Mammary epithelial cell (primary cell): ENCODE measurements at regions of chr4 and their contacts with region 1.

Region 1: GRCh38 chr4:113394730-113395530 is 345.5 kb downstream of the ANK2 start:
- DNase-seq: peak; percentile 78
- H3K4me3 ChIP-seq: no peak overlapping the region
- H3K27ac ChIP-seq: no peak overlapping the region
- H3K4me1 ChIP-seq: no peaks in the 10 kb centered on the region
- H3K27me3 ChIP-seq: no peaks in the 10 kb centered on the region
- CTCF ChIP-seq: peak; percentile 57 to 72

Region 2: DNA sequence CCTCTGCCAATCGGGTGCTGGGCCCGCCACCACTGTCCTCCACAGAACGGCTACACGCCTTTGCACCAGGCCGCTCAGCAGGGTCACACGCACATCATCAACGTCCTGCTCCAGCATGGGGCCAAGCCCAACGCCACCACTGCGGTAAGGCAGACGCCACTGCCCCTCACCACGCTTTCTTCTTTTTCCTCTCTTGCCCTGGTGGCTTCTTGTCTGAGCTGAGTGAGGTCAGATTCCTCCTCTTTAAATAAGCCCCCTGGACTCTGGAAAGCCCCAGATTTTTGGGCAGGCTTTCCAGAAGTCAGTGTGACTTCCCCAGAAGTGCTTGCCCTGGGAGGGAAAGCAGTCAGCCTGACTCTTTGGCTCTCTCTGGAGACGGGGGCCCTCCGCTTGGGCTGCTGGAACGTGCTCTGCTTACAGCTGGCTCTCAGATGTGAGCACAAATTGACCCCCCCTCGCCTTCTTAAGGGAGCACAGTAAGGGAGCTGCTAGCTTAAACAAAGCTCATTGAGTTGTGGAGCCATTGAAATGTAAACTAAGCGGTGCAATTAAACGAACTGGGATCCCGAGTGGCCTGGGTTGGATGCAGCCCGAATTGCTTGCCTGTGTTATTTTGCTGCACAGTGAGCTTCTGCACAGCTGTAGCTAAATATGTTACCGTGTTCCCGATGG is 102.4 kb before region 1 on chr4:
- CTCF ChIA-PET with region 1: no interaction called
- dilution Hi-C with region 1: no loop called
- in situ Hi-C with region 1: no loop called
- intact Hi-C with region 1: loop called (anchors 2 kb)
- DNase-seq: no peak
- H3K4me3 ChIP-seq: no peak overlapping the region
- H3K27ac ChIP-seq: no peak overlapping the region
- H3K4me1 ChIP-seq: no peaks in the 10 kb centered on the region
- H3K27me3 ChIP-seq: no peaks in the 10 kb centered on the region
- CTCF ChIP-seq: no peak

Region 3: DNA sequence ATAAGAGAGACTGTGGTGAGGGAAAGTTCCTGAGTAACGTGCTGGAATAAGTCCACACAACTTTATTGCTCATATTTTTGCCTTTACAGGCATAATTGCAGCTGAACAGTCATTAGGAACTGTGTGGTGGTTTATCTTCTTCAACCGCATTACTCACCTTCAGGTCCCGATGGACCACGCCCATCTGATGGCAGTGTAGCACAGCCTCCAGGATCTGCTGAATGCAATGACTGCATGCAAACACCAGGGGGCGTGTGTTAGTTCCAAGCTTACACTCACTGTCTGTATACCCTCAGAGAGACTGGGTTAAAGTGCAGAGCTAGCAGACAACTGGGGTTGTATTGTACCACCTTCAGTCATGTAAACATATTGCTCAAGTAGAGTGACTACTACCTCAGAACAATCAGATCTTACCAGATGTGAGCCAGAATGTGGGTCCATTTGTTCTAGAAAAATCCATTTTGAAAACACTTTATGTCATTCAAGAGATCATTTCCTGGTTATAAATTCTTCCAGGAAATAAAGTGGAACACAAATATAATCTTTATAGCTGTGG is 152.6 kb after region 1 on chr4:
- CTCF ChIA-PET with region 1: no interaction called
- dilution Hi-C with region 1: no loop called
- in situ Hi-C with region 1: no loop called
- intact Hi-C with region 1: loop called (anchors 1 kb)
- DNase-seq: peak; percentile 98
- H3K4me3 ChIP-seq: no peak overlapping the region
- H3K27ac ChIP-seq: peak overlapping the region; percentile 34
- H3K4me1 ChIP-seq: no peaks in the 10 kb centered on the region
- H3K27me3 ChIP-seq: no peaks in the 10 kb centered on the region
- CTCF ChIP-seq: peak; percentile 98 to 99

Region 4: GRCh38 chr4:113908829-113909228 is 513.9 kb after region 1 on chr4:
- CTCF ChIA-PET with region 1: no interaction called
- dilution Hi-C with region 1: no loop called
- in situ Hi-C with region 1: no loop called
- intact Hi-C with region 1: no loop called
- DNase-seq: no peak
- H3K4me3 ChIP-seq: no peak overlapping the region
- H3K27ac ChIP-seq: no peak overlapping the region
- H3K4me1 ChIP-seq: no peaks in the 10 kb centered on the region
- H3K27me3 ChIP-seq: no peaks in the 10 kb centered on the region
- CTCF ChIP-seq: no peak

Region 5: GRCh38 chr4:113952452-113953029 is 557.6 kb after region 1 on chr4:
- CTCF ChIA-PET with region 1: no interaction called
- dilution Hi-C with region 1: no loop called
- in situ Hi-C with region 1: no loop called
- intact Hi-C with region 1: loop called (anchors 2 kb)
- DNase-seq: peak; percentile 27
- H3K4me3 ChIP-seq: no peak overlapping the region
- H3K27ac ChIP-seq: no peak overlapping the region
- H3K4me1 ChIP-seq: no peaks in the 10 kb centered on the region
- H3K27me3 ChIP-seq: no peaks in the 10 kb centered on the region
- CTCF ChIP-seq: peak; percentile 69 to 75

Region 6: DNA sequence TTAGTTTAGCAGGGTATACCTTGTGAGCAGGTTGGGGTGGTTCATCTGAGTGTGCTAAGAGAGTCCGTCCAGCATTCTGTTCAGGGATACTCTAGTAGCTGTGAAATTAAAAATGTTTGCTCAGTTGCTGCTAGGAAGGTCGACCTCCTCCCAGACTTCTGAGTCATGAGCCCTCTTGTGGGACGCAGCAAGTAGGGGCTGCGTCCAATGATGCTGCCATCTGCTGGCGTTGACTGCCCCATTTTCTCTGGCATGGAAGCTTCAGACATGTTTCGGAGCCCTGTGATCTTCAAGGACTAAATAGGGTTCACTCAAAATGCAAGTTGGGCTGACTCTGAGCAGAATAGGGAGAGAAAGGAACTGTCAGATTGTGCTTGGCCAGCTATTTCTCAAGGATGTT is 785.6 kb after region 1 on chr4:
- CTCF ChIA-PET with region 1: no interaction called
- dilution Hi-C with region 1: no loop called
- in situ Hi-C with region 1: no loop called
- intact Hi-C with region 1: loop called (anchors 5 kb)
- DNase-seq: no peak
- H3K4me3 ChIP-seq: no peak overlapping the region
- H3K27ac ChIP-seq: no peak overlapping the region
- H3K4me1 ChIP-seq: no peaks in the 10 kb centered on the region
- H3K27me3 ChIP-seq: no peaks in the 10 kb centered on the region
- CTCF ChIP-seq: peak; percentile 15 to 46

Region 7: DNA sequence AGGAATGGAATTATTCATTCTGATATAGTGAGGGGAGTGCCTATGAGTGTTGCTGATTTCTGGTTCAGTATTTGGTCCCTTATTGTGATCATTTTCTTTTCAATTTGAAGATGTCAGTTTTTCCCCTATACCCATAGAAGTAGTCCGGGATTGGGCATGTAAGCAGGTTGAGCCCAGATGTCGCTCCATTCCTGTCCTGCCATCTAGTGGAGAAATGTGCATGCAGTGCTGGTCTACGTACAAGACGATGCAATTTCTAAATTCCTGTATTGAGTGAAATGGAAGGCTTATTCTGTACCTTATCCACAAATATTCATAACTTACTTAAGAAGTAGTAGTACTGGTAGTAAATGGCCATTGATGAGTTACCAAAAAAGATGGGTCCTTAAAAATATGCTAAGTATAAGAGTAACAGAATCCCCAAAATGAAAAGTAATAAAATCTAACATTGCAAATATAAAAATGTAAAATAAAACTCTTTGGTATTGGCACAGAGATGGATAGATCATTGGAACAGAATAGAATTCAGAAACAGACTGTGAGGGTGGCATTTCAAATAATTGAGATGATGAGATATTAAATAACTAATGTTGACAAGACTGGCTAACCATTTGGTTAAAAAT is 1264.6 kb after region 1 on chr4:
- CTCF ChIA-PET with region 1: no interaction called
- dilution Hi-C with region 1: no loop called
- in situ Hi-C with region 1: loop called in 1 of 2 experiments (anchors 25 kb)
- intact Hi-C with region 1: no loop called
- DNase-seq: peak; percentile 54
- H3K4me3 ChIP-seq: no peak overlapping the region
- H3K27ac ChIP-seq: no peak overlapping the region
- H3K4me1 ChIP-seq: no peaks in the 10 kb centered on the region
- H3K27me3 ChIP-seq: no peaks in the 10 kb centered on the region
- CTCF ChIP-seq: peak; percentile 88 to 96